HCT116 (cell line): ENCODE measurements at regions of chr12 and their contacts with region 1.

Region 1: DNA sequence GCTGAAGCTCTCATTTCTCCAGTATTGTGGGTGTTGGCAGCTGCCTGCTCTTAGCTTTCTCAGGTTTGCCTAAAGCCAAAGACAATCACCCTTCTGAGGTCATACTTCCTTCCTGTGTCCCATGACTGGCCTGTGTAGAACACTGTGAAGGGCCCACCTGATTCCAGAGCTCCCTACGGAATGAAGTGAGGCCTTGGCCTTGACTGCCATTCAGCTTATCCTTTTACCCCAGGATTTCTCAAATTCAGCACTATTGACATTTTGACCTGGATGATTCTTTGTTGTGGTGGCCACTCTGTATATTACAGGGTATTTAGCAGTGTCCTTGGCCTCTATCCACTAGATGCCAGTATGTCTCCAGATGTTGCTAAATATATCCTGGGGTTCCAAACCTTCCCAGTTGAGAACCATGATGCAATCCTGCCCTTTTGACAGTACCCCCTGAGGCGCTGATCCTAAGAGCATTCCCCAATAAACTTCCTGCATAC is 112.3 kb upstream of the KRR1 start:
- DNase-seq: peak; percentile 89
- ATAC-seq: peak; percentile 92
- H3K4me3 ChIP-seq: no peak overlapping the region
- H3K27ac ChIP-seq: peak overlapping the region; percentile 99
- H3K4me1 ChIP-seq: peaks cover 39 to 70% of the 10 kb centered on the region in 2 experiments
- H3K27me3 ChIP-seq: no peaks in the 10 kb centered on the region
- CTCF ChIP-seq: peak; percentile 49 to 64 (median 51); a peak in 5 of 6 replicates
- POLR2A ChIP-seq: peak; percentile 26
- RAD21 ChIP-seq: peak; percentile 81

Region 2: GRCh38 chr12:75480469-75480949 is 143.2 kb before region 1 on chr12 and contains the start of gene GLIPR1:
- CTCF ChIA-PET with region 1: no interaction called
- POLR2A ChIA-PET with region 1: no interaction called
- RAD21 ChIA-PET with region 1: no interaction called
- intact Hi-C with region 1: no loop called
- DNase-seq: no peak
- ATAC-seq: 0 out of 2 replicates have a peak, but pooled peaks have one; percentile 23
- H3K4me3 ChIP-seq: no peak within 1 kb of the TSS
- H3K27ac ChIP-seq: no peak within 1 kb of the TSS
- H3K4me1 ChIP-seq: peaks cover 6 to 16% of the 10 kb centered on the region in 2 experiments
- H3K27me3 ChIP-seq: no peaks in the 10 kb centered on the region
- CTCF ChIP-seq: no peak
- POLR2A ChIP-seq: no peak
- RAD21 ChIP-seq: no peak
- total RNA-seq, gene GLIPR1: 0.39 TPM

Region 3: GRCh38 chr12:75699728-75700496 is 76.2 kb after region 1 on chr12:
- CTCF ChIA-PET with region 1: no interaction called
- POLR2A ChIA-PET with region 1: interaction called, 4 read pairs
- RAD21 ChIA-PET with region 1: interaction called in 1 of 2 experiments, 3 read pairs
- intact Hi-C with region 1: loop called (anchors 5 kb)
- DNase-seq: no peak
- ATAC-seq: peak; percentile 27
- H3K4me3 ChIP-seq: 0 out of 4 replicates have a peak overlapping the region, but pooled peaks of 1 of the 2 experiments have one; percentile 17
- H3K27ac ChIP-seq: peak overlapping the region; percentile 100
- H3K4me1 ChIP-seq: peaks cover 92 to 100% of the 10 kb centered on the region in 2 experiments
- H3K27me3 ChIP-seq: no peaks in the 10 kb centered on the region
- CTCF ChIP-seq: no peak
- POLR2A ChIP-seq: peak; percentile 2
- RAD21 ChIP-seq: peak; percentile 24; the same call in 1 of the 2 replicates